HEK293 (cell line): ENCODE measurements at regions of chr22 and their contacts with region 1.

Region 1: GRCh38 chr22:44625981-44626687 is 75.9 kb upstream of the PRR5 start:
- H3K4me3 ChIP-seq: no peak overlapping the region
- H3K27ac ChIP-seq: no peak overlapping the region
- H3K4me1 ChIP-seq: no peaks in the 10 kb centered on the region
- CTCF ChIP-seq: peak; percentile 98

Region 2: GRCh38 chr22:44080936-44081861 is 544.9 kb before region 1 on chr22:
- CTCF ChIA-PET with region 1: interaction called, 24 read pairs
- POLR2A ChIA-PET with region 1: no interaction called
- H3K4me3 ChIP-seq: no peak overlapping the region
- H3K27ac ChIP-seq: no peak overlapping the region
- H3K4me1 ChIP-seq: no peaks in the 10 kb centered on the region
- CTCF ChIP-seq: peak; percentile 75

Region 3: GRCh38 chr22:44608597-44609399 is 17.3 kb before region 1 on chr22:
- CTCF ChIA-PET with region 1: interaction called, 25 read pairs
- POLR2A ChIA-PET with region 1: no interaction called
- H3K4me3 ChIP-seq: no peak overlapping the region
- H3K27ac ChIP-seq: no peak overlapping the region
- H3K4me1 ChIP-seq: no peaks in the 10 kb centered on the region
- CTCF ChIP-seq: no peak

Region 4: GRCh38 chr22:44669561-44669976 is 43.4 kb after region 1 on chr22:
- CTCF ChIA-PET with region 1: interaction called, 11 read pairs
- POLR2A ChIA-PET with region 1: no interaction called
- H3K4me3 ChIP-seq: no peak overlapping the region
- H3K27ac ChIP-seq: no peak overlapping the region
- H3K4me1 ChIP-seq: no peaks in the 10 kb centered on the region
- CTCF ChIP-seq: peak; percentile 26; the same call in 1 of the 2 replicates